Heart left ventricle (tissue), 16 donors: ENCODE measurements at regions of chr11 and their contacts with region 1.

Region 1: GRCh38 chr11:12893787-12894672 is 115.1 kb upstream of the RASSF10 start:
- DNase-seq: peak in 3 of 5 donors; percentile 40 to 51 (median 49)
- ATAC-seq: no peak
- H3K4me3 ChIP-seq: no peak overlapping the region
- H3K27ac ChIP-seq: peak overlapping the region in 6 of 12 donors; percentile 16 to 84 (median 38)
- H3K4me1 ChIP-seq: peaks cover 0 to 53% (median 21%) of the 10 kb centered on the region in 12 donors
- H3K27me3 ChIP-seq: no peaks in the 10 kb centered on the region
- CTCF ChIP-seq: peak; percentile 79 to 94 (median 89)
- POLR2A ChIP-seq: no peak

Region 2: GRCh38 chr11:12289667-12290476 is 604.2 kb before region 1 on chr11:
- intact Hi-C with region 1: loop called in 1 of 10 experiments (anchors 5 kb)
- DNase-seq: no peak
- ATAC-seq: no peak
- H3K4me3 ChIP-seq: no peak overlapping the region
- H3K27ac ChIP-seq: peak overlapping the region in 1 of 12 donors; percentile 88
- H3K4me1 ChIP-seq: peaks cover 0 to 39% (median 22%) of the 10 kb centered on the region in 12 donors
- H3K27me3 ChIP-seq: no peaks in the 10 kb centered on the region
- CTCF ChIP-seq: no peak
- POLR2A ChIP-seq: no peak

Region 3: GRCh38 chr11:12377824-12378593 is 516.0 kb before region 1 on chr11:
- intact Hi-C with region 1: loop called in 1 of 10 experiments (anchors 5 kb)
- DNase-seq: peak; percentile 65 to 85 (median 77)
- ATAC-seq: peak; percentile 21 to 82 (median 66)
- H3K4me3 ChIP-seq: peak overlapping the region; percentile 59 to 98 (median 72)
- H3K27ac ChIP-seq: peak overlapping the region; percentile 93 to 99 (median 97)
- H3K4me1 ChIP-seq: peaks cover 1 to 68% (median 37%) of the 10 kb centered on the region in 12 donors
- H3K27me3 ChIP-seq: peaks cover 0 to 11% (median 0%) of the 10 kb centered on the region in 9 donors
- CTCF ChIP-seq: peak in 8 of 12 donors; percentile 14 to 51 (median 28)
- POLR2A ChIP-seq: no peak

Region 4: GRCh38 chr11:12516387-12517105 is 377.5 kb before region 1 on chr11:
- intact Hi-C with region 1: loop called in 3 of 10 experiments (anchors 10 kb)
- DNase-seq: no peak
- ATAC-seq: peak in 1 of 4 donors; percentile 16
- H3K4me3 ChIP-seq: no peak overlapping the region
- H3K27ac ChIP-seq: peak overlapping the region in 1 of 12 donors; percentile 60
- H3K4me1 ChIP-seq: peaks cover 0 to 8% (median 0%) of the 10 kb centered on the region in 12 donors
- H3K27me3 ChIP-seq: no peaks in the 10 kb centered on the region
- CTCF ChIP-seq: no peak
- POLR2A ChIP-seq: no peak

Region 5: DNA sequence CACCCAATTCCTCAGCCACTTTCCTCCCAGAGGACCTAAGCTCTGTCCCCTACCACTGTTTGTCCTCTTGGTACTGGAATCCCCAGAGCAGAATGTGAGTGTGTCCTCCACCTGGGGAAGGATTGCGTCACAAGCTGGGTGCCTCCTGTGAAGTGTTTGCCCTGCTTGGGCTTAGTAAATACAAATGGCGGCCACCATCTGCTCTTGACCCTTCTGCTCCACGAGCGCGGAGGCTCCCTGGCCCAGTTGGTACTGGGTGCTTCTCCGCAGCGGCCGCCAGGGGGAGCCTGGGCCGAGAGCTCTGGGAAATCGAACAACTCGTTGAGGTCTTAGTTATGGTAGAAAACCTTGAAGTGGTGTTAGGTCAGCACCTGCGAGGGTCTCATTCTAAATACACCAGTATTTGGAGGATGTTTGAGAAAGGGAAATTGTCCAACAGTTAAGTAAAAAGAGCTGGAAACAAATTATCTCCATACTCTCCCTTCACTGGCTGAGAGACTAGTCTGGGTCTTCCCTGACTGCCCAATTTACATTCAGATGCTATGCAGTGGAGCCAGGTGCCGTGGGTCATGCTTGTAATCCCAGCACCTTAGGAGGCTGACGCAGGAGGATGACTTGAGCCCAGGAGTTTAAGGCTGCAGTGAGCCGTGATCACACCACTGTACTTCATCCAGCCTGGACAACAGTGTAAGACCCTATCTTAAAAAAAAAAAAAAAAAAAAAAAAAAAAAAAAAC is 294.5 kb before region 1 on chr11:
- intact Hi-C with region 1: loop called in 7 of 10 experiments (anchors 2 to 5 kb)
- DNase-seq: peak; percentile 22 to 76 (median 46)
- ATAC-seq: peak in 3 of 4 donors; percentile 33 to 76 (median 59)
- H3K4me3 ChIP-seq: no peak overlapping the region
- H3K27ac ChIP-seq: no peak overlapping the region
- H3K4me1 ChIP-seq: peaks cover 0 to 33% (median 15%) of the 10 kb centered on the region in 12 donors
- H3K27me3 ChIP-seq: no peaks in the 10 kb centered on the region
- CTCF ChIP-seq: peak; percentile 50 to 72 (median 62)
- POLR2A ChIP-seq: no peak

Region 6: DNA sequence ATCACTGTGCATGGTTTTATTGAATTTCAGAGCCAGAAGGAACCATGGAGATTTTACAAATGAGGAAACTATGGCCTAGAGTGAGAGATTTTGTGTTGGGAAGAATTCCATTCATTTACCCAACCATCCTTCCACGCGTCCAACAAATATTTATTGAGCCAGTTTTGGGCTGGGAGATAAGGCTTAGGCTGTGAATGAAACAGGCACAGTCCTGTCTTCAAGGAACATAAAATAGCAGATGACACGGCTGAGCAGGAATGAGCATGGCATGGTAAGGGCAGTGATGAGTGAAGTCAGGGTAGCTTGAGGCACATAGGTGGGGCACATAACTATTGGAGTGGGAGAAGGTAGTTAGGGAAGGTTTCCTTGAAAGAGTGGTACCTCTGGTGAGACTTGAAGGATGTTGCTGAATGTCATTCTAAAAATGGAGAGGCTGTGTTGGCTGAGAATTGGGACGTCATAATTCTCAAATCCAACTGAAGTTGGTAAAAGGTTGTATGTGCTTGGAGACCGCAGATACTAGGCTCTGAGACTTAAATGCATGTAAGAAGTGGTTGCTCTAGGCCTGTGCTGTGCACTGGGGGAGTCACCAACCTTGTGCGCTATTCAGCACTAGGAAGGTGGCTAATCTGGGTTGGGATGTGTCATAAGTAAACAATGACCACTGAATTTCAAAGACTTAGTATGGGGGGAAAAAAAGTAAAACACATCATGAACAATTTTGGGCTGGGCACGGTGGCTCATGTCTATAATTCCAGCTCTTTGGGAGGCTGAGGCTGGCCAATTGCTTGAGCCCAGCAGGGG is 168.0 kb before region 1 on chr11:
- intact Hi-C with region 1: no loop called
- DNase-seq: no peak
- ATAC-seq: peak in 1 of 4 donors; percentile 40
- H3K4me3 ChIP-seq: no peak overlapping the region
- H3K27ac ChIP-seq: peak overlapping the region in 1 of 12 donors; percentile 15
- H3K4me1 ChIP-seq: peaks cover 11 to 74% (median 50%) of the 10 kb centered on the region in 12 donors
- H3K27me3 ChIP-seq: no peaks in the 10 kb centered on the region
- CTCF ChIP-seq: no peak
- POLR2A ChIP-seq: no peak